ENCODE measurements at regions of chr14 and their contacts with region 1.

Region 1: GRCh38 chr14:32076278-32077080 is 625 bp upstream of the ARHGAP5 start:
- DNase-seq: peak; percentile 82
- CTCF ChIP-seq: no peak

Region 2: DNA sequence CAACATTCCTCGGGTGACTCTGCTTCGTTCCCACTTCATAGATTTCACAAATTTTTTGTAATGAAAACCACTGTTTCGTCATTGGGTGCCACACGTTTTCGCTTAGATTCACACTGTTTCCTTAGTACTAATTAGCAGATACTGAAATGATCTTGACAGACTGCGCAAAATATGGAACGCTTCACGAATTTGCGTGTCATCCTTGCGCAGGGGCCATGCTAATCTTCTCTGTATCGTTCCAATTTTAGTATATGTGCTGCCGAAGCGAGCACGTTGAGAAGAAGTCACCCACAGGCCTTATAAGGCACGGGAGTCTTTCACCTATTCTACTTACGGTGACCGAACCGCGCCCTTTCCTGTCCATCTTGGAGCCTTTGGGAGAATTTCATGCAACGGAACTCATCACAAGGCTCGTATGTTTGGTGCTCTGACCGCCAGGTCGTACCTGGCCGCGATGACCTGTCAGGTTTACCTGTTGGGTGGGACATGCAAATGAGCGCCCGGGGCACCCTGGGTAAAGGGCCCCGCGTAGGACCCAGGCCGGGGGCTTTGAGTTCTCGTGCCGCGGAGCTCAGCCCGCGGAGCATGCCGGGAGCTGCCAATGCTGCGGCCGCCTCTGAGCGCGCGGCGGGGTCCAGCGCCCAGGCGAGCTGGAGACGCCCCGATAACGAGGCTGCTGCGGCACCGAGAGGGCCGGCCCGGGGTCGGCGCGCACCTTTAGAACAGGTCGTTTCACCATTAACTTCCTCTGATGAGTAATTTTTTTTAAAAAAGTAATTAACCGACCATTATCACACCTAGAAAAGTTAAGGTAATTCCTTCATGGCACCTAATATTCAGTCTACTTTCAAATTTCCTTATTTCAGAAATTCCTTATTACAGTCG is 126.8 kb after region 1 on chr14 and contains the start of gene RNU6-8:
- in situ Hi-C with region 1: loop called (anchors 25 kb)
- DNase-seq: peak; percentile 83
- CTCF ChIP-seq: no peak